Endothelial cell of umbilical vein (primary cell): ENCODE measurements at regions of chr2 and their contacts with region 1.

Region 1: GRCh38 chr2:174341286-174341994 is 6.7 kb downstream of the SP9 start:
- DNase-seq: peak; percentile 90
- H3K4me3 ChIP-seq: no peak overlapping the region
- H3K27ac ChIP-seq: no peak overlapping the region
- H3K4me1 ChIP-seq: peaks cover 29% of the 10 kb centered on the region
- H3K27me3 ChIP-seq: peaks cover 70 to 84% of the 10 kb centered on the region in 2 experiments
- CTCF ChIP-seq: peak; percentile 98 to 99
- POLR2A ChIP-seq: no peak

Region 2: GRCh38 chr2:173210270-173211196 is 1130.9 kb before region 1 on chr2:
- CTCF ChIA-PET with region 1: no interaction called
- POLR2A ChIA-PET with region 1: no interaction called
- dilution Hi-C with region 1: no loop called
- intact Hi-C with region 1: loop called (anchors 5 kb)
- DNase-seq: peak; percentile 87
- H3K4me3 ChIP-seq: no peak overlapping the region
- H3K27ac ChIP-seq: no peak overlapping the region
- H3K4me1 ChIP-seq: no peaks in the 10 kb centered on the region
- H3K27me3 ChIP-seq: no peaks in the 10 kb centered on the region
- CTCF ChIP-seq: peak; percentile 71 to 80
- POLR2A ChIP-seq: no peak

Region 3: DNA sequence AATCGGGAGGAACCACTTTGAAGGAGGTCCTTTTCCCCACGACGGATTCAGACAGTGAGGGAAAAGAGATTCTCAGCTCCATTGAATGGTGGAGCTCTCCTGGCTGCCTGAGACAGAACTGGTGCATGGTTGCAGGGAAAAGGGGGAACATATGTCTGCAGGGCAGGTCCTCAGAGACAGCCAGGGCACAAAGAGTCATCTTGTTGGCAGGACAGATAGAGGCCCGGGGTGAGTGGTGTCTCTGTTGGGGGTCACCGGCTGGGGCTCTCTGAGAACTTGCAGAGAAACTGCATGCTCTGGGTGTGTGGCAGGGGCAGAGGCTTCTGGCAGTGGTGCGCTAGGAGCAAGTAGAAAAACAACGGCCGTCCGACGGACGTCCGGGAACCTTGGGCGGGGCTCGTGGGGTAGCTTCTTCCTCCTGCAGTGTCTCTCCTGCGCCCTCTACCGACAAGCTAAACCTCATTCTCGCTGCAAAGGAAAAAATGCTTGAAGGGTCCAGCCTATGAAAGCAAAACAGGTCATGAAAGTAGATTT is 892.4 kb before region 1 on chr2:
- CTCF ChIA-PET with region 1: interaction called, 10 read pairs
- POLR2A ChIA-PET with region 1: no interaction called
- dilution Hi-C with region 1: no loop called
- intact Hi-C with region 1: no loop called
- DNase-seq: peak; percentile 64
- H3K4me3 ChIP-seq: peak overlapping the region; percentile 29 to 45 (median 37)
- H3K27ac ChIP-seq: no peak overlapping the region
- H3K4me1 ChIP-seq: peaks cover 3% of the 10 kb centered on the region
- H3K27me3 ChIP-seq: peaks cover 3 to 9% of the 10 kb centered on the region in 2 experiments
- CTCF ChIP-seq: peak; percentile 63 to 65
- POLR2A ChIP-seq: peak; percentile 21

Region 4: GRCh38 chr2:173749315-173749714 is 592.1 kb before region 1 on chr2:
- CTCF ChIA-PET with region 1: interaction called, 5 read pairs
- POLR2A ChIA-PET with region 1: no interaction called
- dilution Hi-C with region 1: no loop called
- intact Hi-C with region 1: loop called (anchors 5 kb)
- DNase-seq: peak; percentile 8
- H3K4me3 ChIP-seq: no peak overlapping the region
- H3K27ac ChIP-seq: no peak overlapping the region
- H3K4me1 ChIP-seq: no peaks in the 10 kb centered on the region
- H3K27me3 ChIP-seq: peaks cover 4 to 10% of the 10 kb centered on the region in 2 experiments
- CTCF ChIP-seq: no peak
- POLR2A ChIP-seq: no peak

Region 5: GRCh38 chr2:173965329-173966025 is 376.0 kb before region 1 on chr2 and contains the start of gene SP3:
- CTCF ChIA-PET with region 1: interaction called, 6 read pairs
- POLR2A ChIA-PET with region 1: no interaction called
- dilution Hi-C with region 1: no loop called
- intact Hi-C with region 1: loop called (anchors 2 kb)
- DNase-seq: peak; percentile 98
- H3K4me3 ChIP-seq: peak within 1 kb of the TSS; percentile 87 to 92 (median 91)
- H3K27ac ChIP-seq: peak within 1 kb of the TSS; percentile 90
- H3K4me1 ChIP-seq: peaks cover 19% of the 10 kb centered on the region
- H3K27me3 ChIP-seq: no peaks in the 10 kb centered on the region
- CTCF ChIP-seq: no peak
- POLR2A ChIP-seq: peak; percentile 90
- total RNA-seq, gene SP3: 59.0 and 60.1 TPM in 2 replicates

Region 6: DNA sequence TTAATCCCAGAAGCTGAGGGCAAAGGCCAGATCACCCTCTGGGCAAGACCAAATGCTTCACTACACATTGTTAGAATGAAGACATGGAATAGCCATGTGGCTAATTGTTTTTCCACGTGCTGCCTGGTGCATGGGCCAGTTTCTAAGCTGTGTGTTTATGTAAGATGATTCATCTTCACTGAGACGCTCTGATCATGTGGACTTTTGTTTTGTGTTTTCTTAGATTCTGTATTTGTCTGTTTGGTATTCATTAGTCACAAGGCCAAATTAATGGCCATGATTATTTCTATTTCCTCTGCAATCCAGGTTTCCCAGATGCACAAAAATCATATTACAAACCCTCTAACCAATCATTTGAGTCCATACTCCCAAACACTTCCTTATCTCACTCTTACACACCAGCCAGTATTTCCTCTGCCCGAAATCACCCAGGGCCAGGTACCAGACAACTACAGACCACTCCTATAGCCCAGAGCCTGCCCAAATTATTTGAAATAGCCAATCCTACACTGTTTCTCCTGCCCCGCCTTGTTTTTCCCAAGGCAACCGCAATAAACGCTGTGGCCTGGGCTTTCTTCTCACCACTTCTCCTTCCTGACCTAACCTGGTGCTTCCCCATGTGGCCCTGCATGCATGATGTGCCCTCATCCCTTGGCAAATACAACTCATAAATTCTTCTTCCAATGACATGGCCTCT is 282.1 kb before region 1 on chr2:
- CTCF ChIA-PET with region 1: interaction called, 3 read pairs
- POLR2A ChIA-PET with region 1: no interaction called
- dilution Hi-C with region 1: no loop called
- intact Hi-C with region 1: loop called (anchors 2 kb)
- DNase-seq: peak; percentile 96
- H3K4me3 ChIP-seq: no peak overlapping the region
- H3K27ac ChIP-seq: peak overlapping the region; percentile 65
- H3K4me1 ChIP-seq: peaks cover 15% of the 10 kb centered on the region
- H3K27me3 ChIP-seq: peaks cover 0 to 2% of the 10 kb centered on the region in 2 experiments
- CTCF ChIP-seq: no peak
- POLR2A ChIP-seq: no peak

Region 7: GRCh38 chr2:174158003-174158402 is 183.4 kb before region 1 on chr2:
- CTCF ChIA-PET with region 1: interaction called, 16 read pairs
- POLR2A ChIA-PET with region 1: no interaction called
- dilution Hi-C with region 1: no loop called
- intact Hi-C with region 1: loop called (anchors 1 kb)
- DNase-seq: peak; percentile 29
- H3K4me3 ChIP-seq: no peak overlapping the region
- H3K27ac ChIP-seq: no peak overlapping the region
- H3K4me1 ChIP-seq: peaks cover 11% of the 10 kb centered on the region
- H3K27me3 ChIP-seq: no peaks in the 10 kb centered on the region
- CTCF ChIP-seq: peak; percentile 45 to 57
- POLR2A ChIP-seq: no peak

Region 8: DNA sequence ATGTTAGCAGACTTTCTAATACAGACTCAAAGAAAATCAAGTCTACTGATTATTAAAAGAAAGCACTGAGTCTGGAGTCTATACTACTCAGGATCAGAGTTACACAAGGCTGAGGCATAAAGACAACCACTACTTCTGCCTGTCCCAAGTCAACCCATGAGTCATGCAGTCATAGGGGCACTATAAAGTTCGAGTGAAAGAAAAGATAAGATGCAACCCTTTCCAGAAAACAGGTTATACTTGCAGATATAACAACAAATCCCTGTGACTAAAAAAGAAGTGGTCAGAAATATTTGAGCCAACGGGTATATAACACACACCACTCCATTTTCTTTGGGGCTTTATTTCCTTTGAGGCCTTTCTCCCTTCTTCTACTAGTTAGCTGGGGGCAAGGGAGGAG is 35.5 kb after region 1 on chr2:
- CTCF ChIA-PET with region 1: no interaction called
- POLR2A ChIA-PET with region 1: no interaction called
- dilution Hi-C with region 1: no loop called
- intact Hi-C with region 1: no loop called
- DNase-seq: no peak
- H3K4me3 ChIP-seq: no peak overlapping the region
- H3K27ac ChIP-seq: no peak overlapping the region
- H3K4me1 ChIP-seq: no peaks in the 10 kb centered on the region
- H3K27me3 ChIP-seq: no peaks in the 10 kb centered on the region
- CTCF ChIP-seq: no peak
- POLR2A ChIP-seq: no peak